Endothelial cell of umbilical vein (primary cell): ENCODE measurements at regions of chr17 and their contacts with region 1.

Region 1: DNA sequence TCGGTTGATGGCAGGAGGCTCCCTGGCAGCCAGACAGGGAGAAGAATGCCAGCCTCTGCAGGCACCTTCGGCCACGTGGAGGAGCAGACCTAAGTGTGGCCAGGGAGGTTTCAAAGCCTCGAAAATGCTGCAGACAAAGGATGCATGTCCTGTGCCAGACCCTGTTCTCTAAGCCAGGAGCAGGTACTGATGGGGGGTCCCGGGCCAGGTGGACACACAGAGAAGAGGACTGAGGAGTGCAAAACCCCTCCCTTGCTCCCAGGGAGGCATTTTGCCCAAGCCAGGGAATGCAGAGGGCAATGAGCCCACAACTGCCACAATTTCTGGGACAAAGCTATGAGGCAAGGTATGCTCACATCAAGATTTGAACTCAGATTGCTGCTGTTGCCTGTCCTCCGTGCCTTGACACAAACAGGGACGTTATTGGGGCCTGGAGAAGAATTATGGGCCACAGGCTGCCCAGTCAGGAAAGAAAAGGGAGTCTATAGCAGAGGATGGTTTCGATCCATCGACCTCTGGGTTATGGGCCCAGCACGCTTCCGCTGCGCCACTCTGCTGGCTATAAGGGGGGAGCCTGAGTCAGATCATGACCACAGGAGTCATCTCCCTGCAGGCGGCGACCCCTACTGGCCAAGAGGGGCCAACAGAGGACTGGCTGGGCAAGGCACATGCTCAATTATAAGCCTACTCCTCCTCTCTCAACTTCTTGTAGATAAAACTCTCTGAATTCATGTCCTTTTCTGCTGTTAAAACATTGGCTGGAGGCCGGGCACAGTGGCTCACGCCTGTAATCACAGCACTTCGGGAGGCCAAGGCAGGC is 25.1 kb upstream of the FOXK2 start:
- DNase-seq: peak; percentile 92
- H3K4me3 ChIP-seq: no peak overlapping the region
- H3K27ac ChIP-seq: no peak overlapping the region
- H3K4me1 ChIP-seq: peaks cover 8% of the 10 kb centered on the region
- H3K27me3 ChIP-seq: no peaks in the 10 kb centered on the region
- CTCF ChIP-seq: peak; percentile 85 to 94
- POLR2A ChIP-seq: no peak

Region 2: DNA sequence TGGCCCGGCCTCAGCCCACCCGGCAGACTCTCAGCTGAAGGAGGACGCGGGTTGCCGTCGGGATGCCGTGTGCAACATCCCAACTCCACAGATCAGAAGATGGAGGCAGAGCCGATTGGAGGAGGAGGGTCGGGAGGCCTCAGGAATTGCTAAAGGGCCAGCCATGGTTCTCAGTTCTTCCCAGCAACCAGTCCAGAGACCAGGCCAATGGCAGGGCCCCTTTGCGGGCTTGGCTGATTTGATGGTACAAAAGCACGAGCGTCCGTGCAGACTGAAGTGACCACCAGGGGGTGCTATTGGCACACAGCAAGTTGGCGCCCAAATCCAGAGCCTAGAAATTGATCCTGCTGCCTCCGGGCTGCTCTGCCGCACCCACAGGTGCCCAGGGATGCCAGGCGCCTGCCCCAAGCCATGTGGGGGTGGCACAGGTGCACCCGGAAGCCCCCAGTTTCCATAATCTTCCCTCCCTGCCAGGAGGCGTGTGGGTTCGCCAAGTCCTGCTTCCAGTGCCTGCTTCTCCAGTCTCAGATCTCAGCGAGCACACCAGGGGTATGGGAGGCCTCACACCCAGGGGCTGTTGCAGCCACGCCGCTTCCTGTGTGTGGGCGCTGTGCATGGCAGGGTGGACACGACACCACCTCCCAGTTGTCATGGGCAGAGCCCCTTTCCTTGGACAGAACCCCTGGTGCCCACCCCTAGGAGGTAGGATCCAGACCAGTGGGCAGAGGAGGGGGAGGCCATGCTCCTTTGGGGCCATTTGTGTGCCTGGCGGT is 142.5 kb before region 1 on chr17:
- CTCF ChIA-PET with region 1: interaction called, 3 read pairs
- POLR2A ChIA-PET with region 1: no interaction called
- dilution Hi-C with region 1: no loop called
- intact Hi-C with region 1: loop called (anchors 1 kb)
- DNase-seq: peak; percentile 85
- H3K4me3 ChIP-seq: no peak overlapping the region
- H3K27ac ChIP-seq: no peak overlapping the region
- H3K4me1 ChIP-seq: no peaks in the 10 kb centered on the region
- H3K27me3 ChIP-seq: no peaks in the 10 kb centered on the region
- CTCF ChIP-seq: peak; percentile 93 to 96
- POLR2A ChIP-seq: no peak

Region 3: GRCh38 chr17:82380860-82381702 is 113.4 kb before region 1 on chr17:
- CTCF ChIA-PET with region 1: no interaction called
- POLR2A ChIA-PET with region 1: no interaction called
- dilution Hi-C with region 1: no loop called
- intact Hi-C with region 1: no loop called
- DNase-seq: no peak
- H3K4me3 ChIP-seq: no peak overlapping the region
- H3K27ac ChIP-seq: no peak overlapping the region
- H3K4me1 ChIP-seq: no peaks in the 10 kb centered on the region
- H3K27me3 ChIP-seq: peaks cover under 1 to 3% of the 10 kb centered on the region in 2 experiments
- CTCF ChIP-seq: no peak
- POLR2A ChIP-seq: no peak

Region 4: DNA sequence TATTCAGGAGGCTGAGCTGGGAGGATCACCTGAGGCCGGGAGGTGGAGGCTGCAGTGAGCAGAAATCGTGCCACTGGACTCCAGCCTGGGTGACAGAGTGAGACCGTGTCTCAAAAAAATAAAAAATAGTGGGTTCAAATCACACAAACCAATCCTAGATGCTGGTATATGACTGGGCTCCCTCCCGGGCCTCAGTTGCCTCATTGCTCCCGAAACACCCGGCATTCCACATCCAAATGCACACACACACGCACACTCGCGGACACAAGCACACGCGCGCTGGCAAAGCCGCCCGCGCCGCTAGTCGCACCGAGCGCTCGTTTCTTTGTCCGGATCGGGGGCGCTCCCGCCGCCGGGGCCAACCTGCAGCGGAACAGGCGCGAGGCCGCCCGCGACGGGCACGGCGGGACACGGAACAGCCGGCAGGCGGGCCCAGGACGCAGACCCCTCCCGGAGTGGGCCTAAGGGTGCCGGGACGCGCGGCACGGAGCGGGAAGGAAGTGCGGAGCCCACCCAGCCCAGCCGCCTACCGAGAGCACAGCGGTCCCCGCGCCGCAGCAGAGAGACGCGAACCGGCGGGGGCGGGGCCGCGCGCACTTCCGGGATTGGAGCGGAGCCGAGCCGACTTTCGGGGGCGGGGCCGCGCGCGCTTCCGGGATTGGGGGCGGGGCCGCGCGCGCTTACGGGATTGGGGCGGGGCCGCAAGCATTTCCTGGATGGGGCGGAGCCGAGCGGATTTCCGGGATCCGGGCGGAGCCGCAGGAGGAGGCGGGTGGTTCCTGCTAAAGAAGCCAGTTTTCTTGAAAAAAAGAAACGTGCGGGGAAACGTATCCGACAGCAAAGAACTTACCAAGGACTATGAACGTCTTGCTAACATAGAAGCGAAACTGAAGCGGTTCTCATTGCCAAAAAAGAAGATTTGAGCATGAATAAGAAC is 44.0 kb before region 1 on chr17 and contains the start of gene CYBC1:
- CTCF ChIA-PET with region 1: no interaction called
- POLR2A ChIA-PET with region 1: no interaction called
- dilution Hi-C with region 1: no loop called
- intact Hi-C with region 1: loop called (anchors 2 kb)
- DNase-seq: peak; percentile 89
- H3K4me3 ChIP-seq: peak within 1 kb of the TSS; percentile 35 to 78 (median 53)
- H3K27ac ChIP-seq: peak within 1 kb of the TSS; percentile 38
- H3K4me1 ChIP-seq: peaks cover 6% of the 10 kb centered on the region
- H3K27me3 ChIP-seq: no peaks in the 10 kb centered on the region
- CTCF ChIP-seq: no peak
- POLR2A ChIP-seq: no peak
- total RNA-seq, gene CYBC1: 60.6 and 71.8 TPM in 2 replicates

Region 5: DNA sequence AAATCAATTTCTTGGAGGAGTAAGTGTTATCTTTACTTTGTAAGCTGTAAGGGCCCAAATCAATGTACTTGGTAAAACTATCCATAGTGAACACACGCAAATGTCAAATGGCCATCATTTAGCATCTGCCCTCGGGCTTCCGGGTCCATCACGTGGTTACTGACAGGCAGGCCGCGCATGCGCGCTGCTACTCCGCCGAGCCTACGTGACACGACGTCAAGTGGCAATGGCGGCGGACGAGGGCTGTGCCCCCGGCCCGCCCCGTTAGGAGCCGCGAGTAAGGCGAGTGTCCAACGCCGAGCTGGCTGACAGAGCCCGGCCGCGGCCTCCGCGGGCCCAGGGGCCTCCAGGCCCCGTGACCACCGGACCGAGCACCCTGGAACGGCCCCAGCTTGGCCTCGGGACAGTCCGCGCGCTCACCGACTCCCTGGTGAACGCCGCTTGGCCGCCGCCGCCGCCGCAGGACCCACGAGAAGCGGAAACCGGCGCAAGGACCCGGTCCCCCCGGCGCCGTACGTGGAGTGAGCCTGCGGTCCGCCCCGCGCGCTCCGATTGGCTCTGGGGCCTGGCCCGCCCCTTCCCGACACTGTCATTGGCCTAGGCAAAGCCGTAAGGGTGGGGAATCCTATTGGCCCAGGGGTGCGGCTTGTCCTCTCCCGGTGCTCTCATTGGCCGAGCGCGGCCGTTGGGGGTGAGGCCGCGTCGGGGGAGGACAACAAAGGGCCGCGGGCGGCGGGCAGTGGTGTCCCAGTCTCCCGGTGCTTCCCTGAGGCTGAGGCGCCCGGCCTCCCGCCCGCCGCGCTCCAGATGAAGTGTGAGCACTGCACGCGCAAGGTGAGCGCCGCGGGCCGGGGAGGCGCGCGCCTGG is 36.2 kb before region 1 on chr17 and contains the start of gene NARF:
- CTCF ChIA-PET with region 1: interaction called, 3 read pairs
- POLR2A ChIA-PET with region 1: no interaction called
- dilution Hi-C with region 1: no loop called
- intact Hi-C with region 1: loop called (anchors 1 kb)
- DNase-seq: peak; percentile 98
- H3K4me3 ChIP-seq: peak within 1 kb of the TSS; percentile 30 to 65 (median 57)
- H3K27ac ChIP-seq: peak within 1 kb of the TSS; percentile 96
- H3K4me1 ChIP-seq: peaks cover 11% of the 10 kb centered on the region
- H3K27me3 ChIP-seq: no peaks in the 10 kb centered on the region
- CTCF ChIP-seq: no peak
- POLR2A ChIP-seq: peak; percentile 85
- total RNA-seq, gene NARF: 83.4 and 85.6 TPM in 2 replicates

Region 6: GRCh38 chr17:82518826-82519810 is 24.7 kb after region 1 on chr17 and contains the start of gene FOXK2:
- CTCF ChIA-PET with region 1: interaction called, 5 read pairs
- POLR2A ChIA-PET with region 1: no interaction called
- dilution Hi-C with region 1: no loop called
- intact Hi-C with region 1: loop called (anchors 1 kb)
- DNase-seq: peak; percentile 93
- H3K4me3 ChIP-seq: peak within 1 kb of the TSS; percentile 81 to 93 (median 88)
- H3K27ac ChIP-seq: peak within 1 kb of the TSS; percentile 82
- H3K4me1 ChIP-seq: peaks cover 2% of the 10 kb centered on the region
- H3K27me3 ChIP-seq: no peaks in the 10 kb centered on the region
- CTCF ChIP-seq: no peak
- POLR2A ChIP-seq: peak; percentile 78
- total RNA-seq, gene FOXK2: 75.1 and 79.3 TPM in 2 replicates

Region 7: GRCh38 chr17:82823004-82823403 is 328.6 kb after region 1 on chr17:
- CTCF ChIA-PET with region 1: no interaction called
- POLR2A ChIA-PET with region 1: no interaction called
- dilution Hi-C with region 1: no loop called
- intact Hi-C with region 1: no loop called
- DNase-seq: no peak
- H3K4me3 ChIP-seq: no peak overlapping the region
- H3K27ac ChIP-seq: no peak overlapping the region
- H3K4me1 ChIP-seq: no peaks in the 10 kb centered on the region
- H3K27me3 ChIP-seq: no peaks in the 10 kb centered on the region
- CTCF ChIP-seq: peak; percentile 17 to 22
- POLR2A ChIP-seq: no peak